A549 (cell line): ENCODE measurements at regions of chr13 and their contacts with region 1.

Region 1: DNA sequence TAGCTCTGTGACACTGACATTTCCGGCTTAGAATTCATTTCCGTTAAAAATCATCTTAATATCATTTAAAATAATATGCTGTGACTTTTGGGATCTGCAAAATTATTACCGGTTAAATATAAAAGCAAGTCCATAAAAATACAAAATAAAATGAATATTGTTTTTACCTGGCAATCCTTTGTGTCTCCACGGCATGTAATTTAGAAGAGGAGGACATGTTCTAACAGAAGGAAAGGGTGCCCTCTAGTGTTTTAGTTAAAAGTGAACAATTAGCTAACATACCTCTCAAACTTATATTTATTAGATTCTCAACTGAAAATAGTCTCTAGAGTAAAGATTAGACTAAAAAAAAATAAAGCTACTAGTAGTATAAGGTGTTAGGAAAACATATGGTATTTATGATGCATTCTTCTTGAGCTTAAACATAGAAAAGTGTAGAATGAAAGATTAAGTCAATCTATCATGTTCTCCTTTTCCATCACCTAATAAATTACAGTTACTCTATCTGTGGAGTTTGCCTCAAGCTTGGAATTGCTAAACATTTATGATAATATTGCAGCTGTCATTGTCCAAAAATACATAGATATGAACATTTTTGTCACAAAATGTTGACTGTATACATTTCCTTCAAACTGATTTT is 676.7 kb upstream of the SPRY2 start:
- DNase-seq: peak; percentile 17 to 37
- ATAC-seq: peak in 1 of 2 experiments; percentile 63; a peak in 3 of 6 replicates
- H3K4me3 ChIP-seq: no peak overlapping the region
- H3K27ac ChIP-seq: no peak overlapping the region
- H3K4me1 ChIP-seq: no peaks in the 10 kb centered on the region
- CTCF ChIP-seq: peak; percentile 56
- EP300 ChIP-seq: no peak
- POLR2A ChIP-seq: no peak
- RAD21 ChIP-seq: peak; percentile 64 to 65

Region 2: GRCh38 chr13:80894917-80895316 is 122.7 kb before region 1 on chr13:
- CTCF ChIA-PET with region 1: no interaction called
- POLR2A ChIA-PET with region 1: no interaction called
- DNase-seq: no peak
- ATAC-seq: no peak
- H3K4me3 ChIP-seq: no peak overlapping the region
- H3K27ac ChIP-seq: no peak overlapping the region
- H3K4me1 ChIP-seq: no peaks in the 10 kb centered on the region
- CTCF ChIP-seq: no peak
- EP300 ChIP-seq: no peak
- POLR2A ChIP-seq: no peak
- RAD21 ChIP-seq: no peak

Region 3: DNA sequence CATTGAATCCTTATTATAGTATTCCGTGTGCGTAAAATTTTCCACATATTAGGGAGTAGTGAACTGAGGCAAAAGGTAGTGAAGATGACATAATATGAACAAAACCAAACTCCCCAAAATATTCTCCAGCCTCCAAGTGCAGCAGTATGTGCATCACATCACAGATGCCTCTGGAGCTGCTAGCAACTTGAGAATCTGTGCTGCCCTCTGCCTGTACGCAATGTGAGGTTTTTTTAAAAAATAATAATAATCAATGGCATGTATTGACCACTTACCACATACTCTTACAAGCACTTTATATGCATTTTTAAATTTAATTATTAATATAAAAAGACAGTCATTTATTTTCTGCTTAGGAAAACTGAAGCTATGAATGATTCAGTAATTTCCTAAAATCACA is 93.7 kb before region 1 on chr13:
- CTCF ChIA-PET with region 1: no interaction called
- POLR2A ChIA-PET with region 1: no interaction called
- DNase-seq: no peak
- ATAC-seq: no peak
- H3K4me3 ChIP-seq: no peak overlapping the region
- H3K27ac ChIP-seq: no peak overlapping the region
- H3K4me1 ChIP-seq: no peaks in the 10 kb centered on the region
- CTCF ChIP-seq: no peak
- EP300 ChIP-seq: no peak
- POLR2A ChIP-seq: no peak
- RAD21 ChIP-seq: no peak

Region 4: DNA sequence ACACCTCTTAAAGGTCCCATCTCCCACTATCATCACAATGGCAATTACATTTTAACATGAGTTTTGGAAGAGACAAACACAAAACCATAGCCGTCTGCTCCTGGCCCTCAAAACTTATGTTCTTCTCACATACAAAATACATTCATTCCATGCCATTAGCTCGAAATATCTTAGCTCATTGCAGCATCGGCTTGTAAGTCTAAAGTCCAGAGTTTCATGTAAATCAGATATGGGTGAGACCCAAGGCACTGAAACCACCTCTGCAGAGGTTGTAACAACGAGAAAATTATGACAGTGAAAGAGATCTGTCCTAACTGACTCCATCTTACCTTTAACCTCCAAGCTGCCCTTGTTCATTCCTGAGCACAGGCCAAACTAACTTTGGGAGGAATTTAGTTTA is 41.7 kb before region 1 on chr13:
- CTCF ChIA-PET with region 1: interaction called, 10 read pairs
- POLR2A ChIA-PET with region 1: no interaction called
- DNase-seq: no peak
- ATAC-seq: no peak
- H3K4me3 ChIP-seq: no peak overlapping the region
- H3K27ac ChIP-seq: no peak overlapping the region
- H3K4me1 ChIP-seq: no peaks in the 10 kb centered on the region
- CTCF ChIP-seq: no peak
- EP300 ChIP-seq: no peak
- POLR2A ChIP-seq: no peak
- RAD21 ChIP-seq: no peak